ENCODE measurements at regions of chr3 and their contacts with region 1.

Region 1: DNA sequence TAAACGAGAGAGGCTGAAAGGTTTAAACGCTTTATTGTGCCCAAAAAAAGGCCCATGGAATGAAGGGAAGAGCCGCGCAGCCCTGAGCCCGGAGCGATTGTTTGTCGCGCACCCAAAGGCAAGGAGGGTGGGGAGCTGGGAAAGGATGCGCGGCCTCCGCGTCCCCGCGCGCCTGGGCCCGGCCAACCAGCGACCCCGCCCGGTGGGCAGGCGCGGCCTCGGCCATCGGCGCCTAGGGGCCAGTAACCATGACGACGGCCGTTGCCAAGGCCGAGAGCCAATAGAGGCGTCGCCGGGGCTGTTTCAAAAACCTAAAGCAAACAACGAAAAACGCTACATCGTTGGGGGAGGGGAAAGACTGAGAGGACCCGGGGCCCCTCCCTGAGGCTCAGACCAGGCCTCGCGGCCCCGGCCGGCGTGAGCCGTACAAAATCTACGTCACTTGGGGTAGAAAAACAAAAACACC is 36.1 kb downstream of the HMCES start:
- DNase-seq: no peak
- H3K4me3 ChIP-seq: peak overlapping the region; percentile 73 to 88 (median 76)
- H3K27ac ChIP-seq: peak overlapping the region; percentile 88 to 94 (median 92)
- H3K4me1 ChIP-seq: peaks cover 17 to 34% (median 28%) of the 10 kb centered on the region in 4 donors
- H3K27me3 ChIP-seq: no peaks in the 10 kb centered on the region
- CTCF ChIP-seq: peak in 1 of 3 experiments; percentile 17
- EP300 ChIP-seq: no peak
- POLR2A ChIP-seq: no peak

Region 2: DNA sequence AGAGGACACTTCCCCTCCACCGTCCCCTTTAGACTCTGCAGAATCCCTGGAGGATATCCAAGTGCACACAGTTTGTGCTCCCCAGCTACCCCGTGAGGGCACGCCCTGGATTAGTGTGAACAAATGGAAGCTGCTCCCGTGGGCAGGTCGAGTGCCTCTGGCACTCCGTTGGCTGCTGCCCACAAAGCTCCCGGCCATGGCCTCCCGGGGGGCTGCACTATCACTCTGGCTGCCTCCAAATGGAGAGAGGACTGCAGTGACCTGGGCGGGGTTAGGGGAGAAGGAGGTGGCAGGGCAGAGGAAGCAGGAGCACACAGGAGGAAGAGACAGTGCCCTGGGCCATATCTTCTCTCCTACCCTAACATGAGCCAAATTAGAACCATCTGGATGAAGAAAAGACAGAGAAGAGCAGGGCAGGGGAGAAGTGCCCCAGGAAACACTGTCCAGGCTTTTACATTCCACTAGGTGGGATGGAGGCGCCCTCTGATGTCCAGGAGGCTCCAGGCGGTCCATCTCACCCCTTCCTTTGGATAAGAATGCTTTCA is 464.8 kb before region 1 on chr3:
- intact Hi-C with region 1: no loop called
- DNase-seq: no peak
- H3K4me3 ChIP-seq: no peak overlapping the region
- H3K27ac ChIP-seq: no peak overlapping the region
- H3K4me1 ChIP-seq: peaks cover 13 to 18% (median 16%) of the 10 kb centered on the region in 4 donors
- H3K27me3 ChIP-seq: no peaks in the 10 kb centered on the region
- CTCF ChIP-seq: no peak
- EP300 ChIP-seq: no peak
- POLR2A ChIP-seq: no peak

Region 3: GRCh38 chr3:129278439-129278970 is 36.3 kb before region 1 on chr3 and contains the start of gene HMCES:
- intact Hi-C with region 1: loop called (anchors 2 kb)
- DNase-seq: peak; percentile 98
- H3K4me3 ChIP-seq: peak within 1 kb of the TSS; percentile 74 to 99 (median 83)
- H3K27ac ChIP-seq: peak within 1 kb of the TSS; percentile 93 to 97 (median 95)
- H3K4me1 ChIP-seq: peaks cover 15 to 42% (median 34%) of the 10 kb centered on the region in 4 donors
- H3K27me3 ChIP-seq: no peaks in the 10 kb centered on the region
- CTCF ChIP-seq: peak in 1 of 3 experiments; percentile 9
- EP300 ChIP-seq: no peak
- POLR2A ChIP-seq: peak; percentile 40
- total RNA-seq, gene HMCES: 24.5 to 39.3 (median 30.6) TPM